Posterior vena cava (tissue), 2 donors: ENCODE measurements at regions of chr5 and their contacts with region 1.

Region 1: GRCh38 chr5:150217873-150218692 is 28.2 kb downstream of the SLC6A7 start:
- DNase-seq: peak; percentile 94

Region 2: GRCh38 chr5:149810618-149811255 is 407.3 kb before region 1 on chr5:
- intact Hi-C with region 1: no loop called
- DNase-seq: no peak

Region 3: GRCh38 chr5:150129813-150130492 is 88.1 kb before region 1 on chr5:
- intact Hi-C with region 1: loop called (anchors 5 kb)
- DNase-seq: peak; percentile 91

Region 4: GRCh38 chr5:150234576-150235499 is 16.8 kb after region 1 on chr5:
- intact Hi-C with region 1: no loop called
- DNase-seq: no peak